Motor neuron (in vitro differentiated cells): ENCODE measurements at regions of chr18 and their contacts with region 1.

Region 1: GRCh38 chr18:50786864-50787263 is 33.0 kb downstream of the MRO start:
- ATAC-seq: peak in 3 of 8 experiments; percentile 7 to 72 (median 33)
- H3K4me3 ChIP-seq: no peak overlapping the region
- H3K27ac ChIP-seq: no peak overlapping the region
- H3K4me1 ChIP-seq: peaks cover 0 to 4% of the 10 kb centered on the region in 2 donors

Region 2: DNA sequence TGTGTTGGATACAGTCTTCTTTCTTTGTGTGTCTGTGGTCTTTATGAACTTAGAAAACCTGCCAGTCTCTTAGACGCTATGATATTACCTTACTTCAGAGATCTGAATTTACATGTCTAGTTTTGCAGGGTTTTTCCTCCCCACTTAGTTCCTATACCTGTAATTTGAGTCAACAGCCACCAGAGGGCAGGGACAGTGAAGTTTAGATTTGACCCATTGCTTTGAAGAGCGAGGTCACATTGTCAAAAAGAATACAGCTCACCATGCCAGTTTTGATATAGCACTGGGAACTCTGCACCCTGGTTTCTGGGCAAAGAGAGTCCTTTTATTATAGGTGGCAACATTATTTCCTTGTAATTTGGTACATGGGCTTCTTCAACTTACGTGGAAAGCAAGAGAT is 124.7 kb before region 1 on chr18:
- in situ Hi-C with region 1: loop called in 1 of 9 experiments (anchors 10 kb)
- ATAC-seq: no peak
- H3K4me3 ChIP-seq: no peak overlapping the region
- H3K27ac ChIP-seq: no peak overlapping the region
- H3K4me1 ChIP-seq: peaks cover 15 to 23% of the 10 kb centered on the region in 2 donors

Region 3: GRCh38 chr18:51342820-51343219 is 556.0 kb after region 1 on chr18:
- in situ Hi-C with region 1: no loop called
- ATAC-seq: peak in 4 of 8 experiments; percentile 22 to 98 (median 95)
- H3K4me3 ChIP-seq: no peak overlapping the region
- H3K27ac ChIP-seq: no peak overlapping the region
- H3K4me1 ChIP-seq: no peaks in the 10 kb centered on the region